ENCODE measurements at regions of chr2 and their contacts with region 1.

Region 1: DNA sequence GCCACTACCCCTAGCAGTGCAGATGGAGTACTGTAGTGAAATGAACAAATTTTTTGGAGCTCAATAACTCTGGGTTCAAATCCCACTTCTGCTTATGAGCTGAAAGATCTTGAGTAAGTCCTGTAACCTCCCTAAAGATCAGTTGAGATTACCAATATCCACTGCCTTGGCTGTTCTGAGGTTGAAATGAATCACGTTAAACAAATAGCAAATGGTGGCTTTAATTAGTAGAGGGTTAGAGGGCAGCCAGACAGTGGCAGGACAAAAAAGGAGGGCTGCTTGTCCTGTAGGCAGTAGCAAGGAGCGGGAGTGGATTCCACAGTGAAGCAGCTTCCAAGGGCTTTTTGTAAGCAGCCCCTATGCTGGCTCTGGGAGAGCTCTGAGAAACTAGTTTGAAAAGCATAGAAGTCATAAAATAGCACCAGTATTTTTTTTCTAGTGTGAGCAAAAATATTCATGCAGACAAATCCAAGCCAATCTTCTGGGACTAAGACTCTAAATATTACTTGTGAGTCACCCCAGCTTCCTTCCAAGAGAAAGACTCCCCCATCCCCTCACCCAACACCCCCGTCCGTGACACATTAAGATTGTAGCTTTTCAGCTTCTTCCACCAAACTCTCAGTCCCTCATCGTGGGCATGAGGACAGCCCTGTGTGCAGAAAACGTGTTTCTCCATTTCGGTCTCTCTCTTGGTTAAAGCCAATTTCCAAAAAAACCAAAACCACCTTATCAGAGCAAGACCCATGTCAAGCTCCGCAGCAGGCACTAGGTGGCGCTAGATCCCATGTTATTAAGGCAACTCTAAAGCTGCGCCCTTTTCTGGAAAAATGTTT is 123.5 kb upstream of the LGALSL start:
- DNase-seq: peak; percentile 67 to 86 (median 76)
- H3K4me3 ChIP-seq: no peak overlapping the region
- H3K4me3 Mint-ChIP-seq: peak overlapping the region; percentile 61 to 87
- H3K27ac ChIP-seq: no peak overlapping the region
- H3K27ac Mint-ChIP-seq: peak overlapping the region in 2 of 7 donors; percentile 8 to 33
- H3K4me1 ChIP-seq: peaks cover 12 to 14% of the 10 kb centered on the region in 2 donors
- H3K4me1 Mint-ChIP-seq: peaks cover 25% of the 10 kb centered on the region
- H3K27me3 ChIP-seq: no peaks in the 10 kb centered on the region
- H3K27me3 Mint-ChIP-seq: peaks cover 0 to 7% (median 2%) of the 10 kb centered on the region in 3 donors
- CTCF ChIP-seq: peak; percentile 96

Region 2: GRCh38 chr2:64045938-64046337 is 284.6 kb before region 1 on chr2:
- intact Hi-C with region 1: loop called (anchors 1 to 5 kb)
- DNase-seq: no peak
- H3K4me3 ChIP-seq: no peak overlapping the region
- H3K4me3 Mint-ChIP-seq: no peak overlapping the region
- H3K27ac ChIP-seq: no peak overlapping the region
- H3K27ac Mint-ChIP-seq: no peak overlapping the region
- H3K4me1 ChIP-seq: peaks cover 3 to 4% of the 10 kb centered on the region in 2 donors
- H3K4me1 Mint-ChIP-seq: peaks cover 17% of the 10 kb centered on the region
- H3K27me3 ChIP-seq: no peaks in the 10 kb centered on the region
- H3K27me3 Mint-ChIP-seq: no peaks in the 10 kb centered on the region
- CTCF ChIP-seq: no peak

Region 3: DNA sequence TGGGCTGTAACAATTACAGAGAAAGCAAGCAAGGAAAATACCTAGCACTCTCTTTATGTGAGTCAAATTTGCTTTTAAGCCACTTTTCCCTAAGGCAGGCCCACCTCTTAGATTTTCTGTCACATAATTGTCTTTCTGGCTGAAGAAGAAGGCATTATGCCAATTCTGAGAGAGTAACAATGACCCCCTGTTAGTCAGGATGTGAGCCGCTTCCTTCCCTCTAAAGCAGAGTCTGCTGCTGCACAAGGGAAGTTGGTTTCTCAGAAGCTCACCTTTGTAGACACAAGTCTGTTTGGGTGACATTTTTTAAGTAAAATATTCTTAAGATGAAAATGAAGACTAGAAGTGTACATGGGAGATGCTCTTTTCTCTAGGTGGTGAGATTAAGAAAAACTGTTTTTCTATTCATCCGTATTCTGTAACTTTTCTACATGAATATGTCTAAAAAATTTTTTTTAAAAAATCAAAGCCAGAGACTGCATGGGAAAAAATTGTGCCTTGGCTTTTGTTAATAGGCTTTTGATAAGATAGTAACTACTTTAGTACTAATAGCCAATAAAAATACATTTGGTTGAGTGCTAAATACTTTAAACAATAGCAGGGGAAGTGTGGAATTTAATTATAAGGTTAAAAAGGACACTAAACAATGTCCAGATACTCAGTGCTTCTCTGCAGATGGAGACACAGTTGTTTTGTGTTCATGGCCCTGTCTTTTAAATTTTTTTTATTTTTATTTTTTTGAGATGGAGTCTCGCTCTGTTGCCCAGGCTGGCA is 277.8 kb before region 1 on chr2:
- intact Hi-C with region 1: loop called (anchors 1 to 5 kb)
- DNase-seq: peak in 1 of 3 donors; percentile 12
- H3K4me3 ChIP-seq: no peak overlapping the region
- H3K4me3 Mint-ChIP-seq: no peak overlapping the region
- H3K27ac ChIP-seq: no peak overlapping the region
- H3K27ac Mint-ChIP-seq: no peak overlapping the region
- H3K4me1 ChIP-seq: peaks cover 7 to 9% of the 10 kb centered on the region in 2 donors
- H3K4me1 Mint-ChIP-seq: peaks cover 11% of the 10 kb centered on the region
- H3K27me3 ChIP-seq: no peaks in the 10 kb centered on the region
- H3K27me3 Mint-ChIP-seq: peaks cover 0 to 3% (median 0%) of the 10 kb centered on the region in 3 donors
- CTCF ChIP-seq: no peak

Region 4: DNA sequence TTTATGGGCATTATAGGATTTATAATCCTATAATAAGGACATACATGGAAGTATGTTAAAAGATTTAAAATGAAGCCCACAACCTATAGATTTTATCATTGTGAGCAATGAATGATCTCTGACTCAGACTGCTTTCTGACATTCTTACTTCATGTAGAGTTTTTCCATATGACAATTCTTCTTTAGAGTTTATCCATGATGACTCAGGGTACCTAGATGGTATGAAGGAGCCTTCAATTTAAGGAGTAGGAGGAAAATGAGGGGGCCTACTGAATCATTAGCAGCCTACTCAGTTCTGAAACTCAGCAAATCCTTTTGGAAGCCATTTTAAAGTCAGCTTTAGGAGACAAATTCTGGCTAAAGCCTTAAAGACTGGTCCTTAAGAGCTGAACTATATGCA is 196.7 kb before region 1 on chr2:
- intact Hi-C with region 1: loop called in 1 of 2 experiments (anchors 10 kb)
- DNase-seq: peak in 1 of 3 donors; percentile 8
- H3K4me3 ChIP-seq: no peak overlapping the region
- H3K4me3 Mint-ChIP-seq: no peak overlapping the region
- H3K27ac ChIP-seq: no peak overlapping the region
- H3K27ac Mint-ChIP-seq: no peak overlapping the region
- H3K4me1 ChIP-seq: peaks cover 16 to 22% of the 10 kb centered on the region in 2 donors
- H3K4me1 Mint-ChIP-seq: peaks cover 40% of the 10 kb centered on the region
- H3K27me3 ChIP-seq: no peaks in the 10 kb centered on the region
- H3K27me3 Mint-ChIP-seq: no peaks in the 10 kb centered on the region
- CTCF ChIP-seq: no peak

Region 5: DNA sequence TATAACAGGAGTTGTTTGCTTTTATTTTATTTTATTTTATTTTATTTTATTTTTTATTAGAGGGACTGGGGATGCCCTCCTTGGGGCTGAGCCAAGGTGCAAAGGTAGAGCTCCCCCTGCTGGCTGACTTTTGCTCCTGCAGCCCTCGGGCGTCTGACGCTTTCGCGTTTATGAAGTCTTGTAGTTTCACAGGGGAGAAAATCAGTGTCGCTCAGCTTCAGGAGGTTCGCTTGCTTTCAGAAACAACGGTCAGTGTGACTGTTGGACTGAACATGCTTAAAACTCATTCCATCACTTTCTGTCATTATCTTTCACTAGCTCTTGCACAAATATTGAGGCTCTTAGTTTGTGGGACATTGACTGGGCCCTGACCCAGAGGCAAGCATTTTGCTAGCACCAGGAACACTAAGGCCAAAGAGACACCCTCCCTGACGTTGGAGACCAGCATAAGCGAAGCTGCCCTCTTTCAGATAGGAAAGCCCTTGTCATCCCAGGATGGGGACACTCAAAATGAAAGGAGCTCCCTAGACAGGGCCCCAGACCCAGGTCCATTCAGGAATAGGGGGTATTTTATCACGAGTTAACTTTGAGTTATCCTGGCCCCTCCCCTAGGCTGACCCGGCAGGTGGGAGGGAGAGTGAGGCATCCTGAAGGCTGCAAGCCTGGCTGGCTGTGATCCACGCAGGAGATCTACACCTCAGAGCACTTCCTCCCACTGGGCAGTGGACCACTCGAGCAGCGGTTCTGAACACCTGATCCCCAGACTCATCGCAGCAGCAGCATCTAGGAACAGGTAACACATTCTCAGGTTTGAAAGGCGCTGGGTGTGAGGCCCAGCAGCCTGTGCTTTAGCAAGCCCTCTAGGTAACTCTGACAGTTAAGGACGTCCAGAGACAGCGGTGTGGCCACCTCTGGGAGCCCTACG is 157.8 kb after region 1 on chr2:
- intact Hi-C with region 1: loop called (anchors 2 to 5 kb)
- DNase-seq: peak; percentile 45 to 63 (median 58)
- H3K4me3 ChIP-seq: no peak overlapping the region
- H3K4me3 Mint-ChIP-seq: no peak overlapping the region
- H3K27ac ChIP-seq: no peak overlapping the region
- H3K27ac Mint-ChIP-seq: peak overlapping the region in 1 of 7 donors; percentile 65
- H3K4me1 ChIP-seq: peaks cover 0 to 4% of the 10 kb centered on the region in 2 donors
- H3K4me1 Mint-ChIP-seq: peaks cover 8% of the 10 kb centered on the region
- H3K27me3 ChIP-seq: no peaks in the 10 kb centered on the region
- H3K27me3 Mint-ChIP-seq: peaks cover 1 to 8% (median 4%) of the 10 kb centered on the region in 3 donors
- CTCF ChIP-seq: peak; percentile 99

Region 6: GRCh38 chr2:64562148-64562784 is 231.8 kb after region 1 on chr2:
- intact Hi-C with region 1: loop called (anchors 5 kb)
- DNase-seq: peak; percentile 7 to 21 (median 17)
- H3K4me3 ChIP-seq: no peak overlapping the region
- H3K4me3 Mint-ChIP-seq: no peak overlapping the region
- H3K27ac ChIP-seq: peak overlapping the region in 1 of 2 donors; percentile 44
- H3K27ac Mint-ChIP-seq: no peak overlapping the region
- H3K4me1 ChIP-seq: peaks cover 9 to 23% of the 10 kb centered on the region in 2 donors
- H3K4me1 Mint-ChIP-seq: peaks cover 18% of the 10 kb centered on the region
- H3K27me3 ChIP-seq: no peaks in the 10 kb centered on the region
- H3K27me3 Mint-ChIP-seq: no peaks in the 10 kb centered on the region
- CTCF ChIP-seq: peak; percentile 72

Region 7: GRCh38 chr2:64873472-64873924 is 543.0 kb after region 1 on chr2:
- intact Hi-C with region 1: loop called in 1 of 2 experiments (anchors 10 kb)
- DNase-seq: peak; percentile 62 to 73 (median 70)
- H3K4me3 ChIP-seq: peak overlapping the region in 1 of 3 experiments; percentile 48
- H3K4me3 Mint-ChIP-seq: peak overlapping the region; percentile 47 to 70
- H3K27ac ChIP-seq: no peak overlapping the region
- H3K27ac Mint-ChIP-seq: peak overlapping the region in 2 of 7 donors; percentile 18 to 80
- H3K4me1 ChIP-seq: peaks cover 6 to 8% of the 10 kb centered on the region in 2 donors
- H3K4me1 Mint-ChIP-seq: peaks cover 13% of the 10 kb centered on the region
- H3K27me3 ChIP-seq: no peaks in the 10 kb centered on the region
- H3K27me3 Mint-ChIP-seq: peaks cover 0 to 4% (median 1%) of the 10 kb centered on the region in 3 donors
- CTCF ChIP-seq: peak; percentile 92